Posterior vena cava (tissue), 2 donors: ENCODE measurements at regions of chr3 and their contacts with region 1.

Region 1: GRCh38 chr3:177169936-177170722 is 27.2 kb downstream of the TBL1XR1 start:
- DNase-seq: no peak

Region 2: GRCh38 chr3:177085794-177086193 is 84.3 kb before region 1 on chr3:
- intact Hi-C with region 1: loop called in 1 of 2 experiments (anchors 2 kb)
- DNase-seq: no peak

Region 3: GRCh38 chr3:177249203-177249602 is 79.1 kb after region 1 on chr3:
- intact Hi-C with region 1: no loop called
- DNase-seq: no peak

Region 4: GRCh38 chr3:178465260-178466180 is 1295.4 kb after region 1 on chr3:
- intact Hi-C with region 1: loop called in 1 of 2 experiments (anchors 5 kb)
- DNase-seq: no peak